ENCODE measurements at regions of chr10 and their contacts with region 1.

Region 1: GRCh38 chr10:110547139-110547761 is 20.2 kb upstream of the SMC3 start:
- DNase-seq: peak; percentile 63 to 74 (median 72)
- H3K4me3 ChIP-seq: no peak overlapping the region
- H3K27ac ChIP-seq: no peak overlapping the region
- H3K4me1 ChIP-seq: peaks cover 0 to 5% (median 0%) of the 10 kb centered on the region in 4 experiments
- H3K27me3 ChIP-seq: no peaks in the 10 kb centered on the region

Region 2: GRCh38 chr10:110304780-110305421 is 242.3 kb before region 1 on chr10 and contains the start of gene SMNDC1:
- CTCF ChIA-PET with region 1: interaction called, 21 read pairs
- POLR2A ChIA-PET with region 1: no interaction called
- DNase-seq: peak; percentile 97 to 98 (median 98)
- H3K4me3 ChIP-seq: peak within 1 kb of the TSS; percentile 89 to 98 (median 93)
- H3K27ac ChIP-seq: peak within 1 kb of the TSS; percentile 89 to 94
- H3K4me1 ChIP-seq: peaks cover 17 to 38% (median 26%) of the 10 kb centered on the region in 4 experiments
- H3K27me3 ChIP-seq: no peaks in the 10 kb centered on the region

Region 3: GRCh38 chr10:110311357-110311949 is 235.8 kb before region 1 on chr10:
- CTCF ChIA-PET with region 1: interaction called, 21 read pairs
- POLR2A ChIA-PET with region 1: no interaction called
- DNase-seq: peak; percentile 61 to 69 (median 68)
- H3K4me3 ChIP-seq: peak overlapping the region in 1 of 7 experiments; percentile 59
- H3K27ac ChIP-seq: no peak overlapping the region
- H3K4me1 ChIP-seq: peaks cover 14 to 34% (median 25%) of the 10 kb centered on the region in 4 experiments
- H3K27me3 ChIP-seq: no peaks in the 10 kb centered on the region

Region 4: GRCh38 chr10:110429289-110429688 is 118.0 kb before region 1 on chr10:
- CTCF ChIA-PET with region 1: no interaction called
- POLR2A ChIA-PET with region 1: no interaction called
- DNase-seq: no peak
- H3K4me3 ChIP-seq: no peak overlapping the region
- H3K27ac ChIP-seq: no peak overlapping the region
- H3K4me1 ChIP-seq: peaks cover 0 to 21% (median 1%) of the 10 kb centered on the region in 4 experiments
- H3K27me3 ChIP-seq: no peaks in the 10 kb centered on the region

Region 5: DNA sequence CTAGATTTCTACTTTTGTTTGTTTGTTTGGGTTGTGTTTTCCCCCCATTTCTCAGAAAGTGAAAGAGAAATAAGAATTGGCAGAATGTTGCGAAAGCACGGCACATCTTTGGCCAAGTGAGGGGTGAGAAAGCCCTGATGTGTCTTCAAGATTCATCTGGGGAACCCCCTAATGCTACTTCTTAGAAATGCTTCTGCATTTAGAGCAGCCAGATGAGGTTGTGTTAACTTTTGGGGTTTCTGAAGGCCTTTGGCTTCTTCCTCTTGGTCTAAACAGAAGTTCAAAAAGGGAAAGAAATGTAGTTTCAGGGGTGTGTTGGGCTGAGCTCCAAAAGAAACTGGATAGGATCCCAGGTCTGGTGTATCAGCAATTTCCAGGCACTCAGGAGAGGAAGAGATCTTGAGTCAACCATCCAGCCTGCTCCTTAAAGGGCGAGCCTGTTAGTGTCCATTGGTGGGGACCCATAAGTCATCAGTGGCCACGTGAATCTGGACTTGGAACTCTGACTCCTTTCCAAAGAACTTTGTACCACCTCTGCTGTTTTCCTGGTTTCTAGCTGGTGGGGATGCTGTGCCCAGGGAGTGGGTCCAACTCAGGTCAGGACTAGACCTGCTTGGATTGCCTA is 43.0 kb before region 1 on chr10:
- CTCF ChIA-PET with region 1: interaction called, 11 read pairs
- POLR2A ChIA-PET with region 1: no interaction called
- DNase-seq: peak; percentile 75 to 96 (median 96)
- H3K4me3 ChIP-seq: peak overlapping the region in 1 of 7 experiments; percentile 21
- H3K27ac ChIP-seq: peak overlapping the region in 1 of 2 experiments; percentile 44
- H3K4me1 ChIP-seq: peaks cover 16 to 60% (median 48%) of the 10 kb centered on the region in 4 experiments
- H3K27me3 ChIP-seq: peaks cover 0 to 14% (median 10%) of the 10 kb centered on the region in 5 experiments

Region 6: GRCh38 chr10:110522365-110522988 is 24.8 kb before region 1 on chr10:
- CTCF ChIA-PET with region 1: no interaction called
- POLR2A ChIA-PET with region 1: no interaction called
- DNase-seq: no peak
- H3K4me3 ChIP-seq: no peak overlapping the region
- H3K27ac ChIP-seq: no peak overlapping the region
- H3K4me1 ChIP-seq: peaks cover 0 to 5% (median 0%) of the 10 kb centered on the region in 4 experiments
- H3K27me3 ChIP-seq: no peaks in the 10 kb centered on the region